T-cell (primary cell): ENCODE measurements at regions of chr2 and their contacts with region 1.

Region 1: DNA sequence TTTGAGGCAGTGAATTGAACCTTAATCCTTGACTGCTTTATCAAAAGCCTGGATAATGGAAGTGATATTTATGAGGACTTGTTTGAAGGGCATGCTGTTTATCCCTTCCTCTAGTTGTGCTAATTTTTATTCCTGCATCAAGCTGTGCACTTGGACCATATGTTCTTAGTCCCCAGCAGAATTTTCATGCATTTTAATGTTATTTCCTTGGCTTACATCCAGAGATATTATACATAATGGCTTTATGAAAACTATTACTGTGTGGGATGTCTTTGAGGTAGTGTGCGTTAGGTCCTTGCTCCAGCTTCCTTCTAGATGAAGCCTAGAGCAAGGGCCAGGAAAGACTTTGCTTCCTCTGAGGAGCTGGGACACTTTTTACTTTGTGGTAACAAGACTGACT is 378.4 kb downstream of the LPIN1 start:
- DNase-seq: no peak
- ATAC-seq: no peak
- H3K4me3 ChIP-seq: no peak overlapping the region
- H3K4me3 Mint-ChIP-seq: no peak overlapping the region
- H3K27ac ChIP-seq: no peak overlapping the region
- H3K27ac Mint-ChIP-seq: no peak overlapping the region
- H3K4me1 ChIP-seq: peaks cover 27 to 29% of the 10 kb centered on the region in 2 experiments
- H3K4me1 Mint-ChIP-seq: peaks cover 0 to 5% (median 0%) of the 10 kb centered on the region in 3 donors
- H3K27me3 ChIP-seq: no peaks in the 10 kb centered on the region
- H3K27me3 Mint-ChIP-seq: no peaks in the 10 kb centered on the region

Region 2: GRCh38 chr2:12151716-12152115 is 26.9 kb after region 1 on chr2:
- CTCF ChIA-PET with region 1: no interaction called
- POLR2A ChIA-PET with region 1: interaction called in 1 of 2 experiments, 15 read pairs
- DNase-seq: no peak
- ATAC-seq: no peak
- H3K4me3 ChIP-seq: no peak overlapping the region
- H3K4me3 Mint-ChIP-seq: no peak overlapping the region
- H3K27ac ChIP-seq: no peak overlapping the region
- H3K27ac Mint-ChIP-seq: no peak overlapping the region
- H3K4me1 ChIP-seq: no peaks in the 10 kb centered on the region
- H3K4me1 Mint-ChIP-seq: peaks cover 0 to 5% (median 0%) of the 10 kb centered on the region in 3 donors
- H3K27me3 ChIP-seq: no peaks in the 10 kb centered on the region
- H3K27me3 Mint-ChIP-seq: no peaks in the 10 kb centered on the region